Calu3 (cell line): ENCODE measurements at regions of chrX and their contacts with region 1.

Region 1: DNA sequence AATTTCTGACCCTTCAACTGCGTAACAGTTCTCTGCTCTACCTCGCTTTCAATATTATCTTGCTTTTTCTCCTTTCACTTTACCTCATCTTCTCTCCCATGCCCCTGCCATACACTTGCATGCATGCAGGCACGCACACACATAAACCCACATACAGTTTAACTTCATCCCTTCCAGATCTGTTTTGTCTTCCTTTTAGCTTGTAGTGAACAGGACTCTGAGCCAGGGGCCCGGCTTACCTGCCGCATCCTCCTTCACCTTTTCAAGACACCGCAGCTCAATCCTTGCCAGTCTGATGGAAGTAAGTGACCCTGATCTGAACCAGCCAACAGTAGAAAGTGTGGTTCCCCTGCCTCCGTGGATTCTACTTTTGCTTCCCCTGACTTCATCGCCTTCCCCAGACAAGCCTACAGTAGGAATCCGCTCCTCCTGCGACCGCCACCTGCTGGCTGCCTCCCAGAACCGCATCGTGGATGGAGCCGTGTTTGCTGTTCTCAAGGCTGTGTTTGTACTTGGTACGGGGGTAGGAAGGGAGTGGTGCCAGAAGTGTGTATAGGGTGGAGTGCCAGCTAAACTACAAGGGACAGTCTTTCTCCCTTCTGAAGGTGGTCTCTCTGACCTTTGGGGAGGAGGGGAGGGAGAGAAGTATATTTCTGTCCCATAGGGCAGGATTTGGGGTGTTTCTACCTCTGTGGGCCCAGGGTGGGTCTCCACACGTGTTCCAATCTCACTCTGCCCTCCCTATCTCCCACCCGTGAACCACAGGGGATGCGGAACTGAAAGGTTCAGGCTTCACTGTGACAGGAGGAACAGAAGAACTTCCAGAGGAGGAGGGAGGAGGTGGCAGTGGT is 10.7 kb downstream of the MED12 start:
- DNase-seq: peak; percentile 73
- H3K4me3 Mint-ChIP-seq: no peak overlapping the region
- H3K27ac Mint-ChIP-seq: no peak overlapping the region
- H3K4me1 Mint-ChIP-seq: no peaks in the 10 kb centered on the region
- H3K27me3 Mint-ChIP-seq: no peaks in the 10 kb centered on the region
- CTCF ChIP-seq: peak; percentile 73

Region 2: DNA sequence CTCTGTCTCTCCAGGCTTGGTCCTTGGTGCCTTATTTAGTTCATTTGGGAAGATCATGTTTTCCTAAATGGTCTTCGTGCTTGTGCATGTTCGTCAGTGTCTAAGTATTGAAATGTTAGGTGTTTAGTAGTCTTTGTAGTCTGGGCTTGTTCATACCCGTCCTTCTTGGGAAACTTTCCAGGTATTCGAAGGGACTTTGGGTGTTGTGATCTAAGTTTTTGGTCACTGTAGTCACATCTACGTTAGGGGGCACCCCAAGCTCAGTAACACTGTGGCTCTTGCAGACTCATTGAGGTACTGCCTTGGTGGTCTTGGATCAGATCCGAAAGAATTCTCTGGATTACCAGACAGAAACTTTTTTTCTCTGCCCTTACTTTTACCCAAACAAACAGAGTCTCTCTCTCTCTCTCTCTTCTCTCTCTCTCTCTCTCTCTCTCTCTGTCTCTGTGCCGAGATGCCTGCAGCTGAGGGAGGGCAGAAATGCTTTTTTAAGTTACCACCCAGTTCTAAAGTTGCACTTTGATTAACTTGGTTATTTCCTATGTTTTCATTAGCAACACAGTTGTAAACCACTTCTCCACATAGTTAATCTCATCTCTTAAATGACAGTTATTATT is 130.6 kb before region 1 on chrX:
- CTCF ChIA-PET with region 1: interaction called, 3 read pairs
- intact Hi-C with region 1: loop called (anchors 2 kb)
- DNase-seq: peak; percentile 26
- H3K4me3 Mint-ChIP-seq: no peak overlapping the region
- H3K27ac Mint-ChIP-seq: no peak overlapping the region
- H3K4me1 Mint-ChIP-seq: peaks cover 7% of the 10 kb centered on the region
- H3K27me3 Mint-ChIP-seq: peaks cover 41% of the 10 kb centered on the region
- CTCF ChIP-seq: no peak